Naive thymus-derived CD4-positive, alpha-beta T cell (primary cell): ENCODE measurements at regions of chr4 and their contacts with region 1.

Region 1: GRCh38 chr4:163651761-163652160 is 157.3 kb downstream of the TMA16 start:
- DNase-seq: no peak
- ATAC-seq: no peak
- H3K4me3 ChIP-seq: no peak overlapping the region
- H3K4me3 Mint-ChIP-seq: no peak overlapping the region
- H3K27ac ChIP-seq: no peak overlapping the region
- H3K27ac Mint-ChIP-seq: no peak overlapping the region
- H3K4me1 ChIP-seq: no peaks in the 10 kb centered on the region
- H3K4me1 Mint-ChIP-seq: peaks cover 0 to 8% (median 0%) of the 10 kb centered on the region in 7 donors
- H3K27me3 ChIP-seq: no peaks in the 10 kb centered on the region
- H3K27me3 Mint-ChIP-seq: peaks cover 0 to 5% (median 0%) of the 10 kb centered on the region in 5 donors

Region 2: DNA sequence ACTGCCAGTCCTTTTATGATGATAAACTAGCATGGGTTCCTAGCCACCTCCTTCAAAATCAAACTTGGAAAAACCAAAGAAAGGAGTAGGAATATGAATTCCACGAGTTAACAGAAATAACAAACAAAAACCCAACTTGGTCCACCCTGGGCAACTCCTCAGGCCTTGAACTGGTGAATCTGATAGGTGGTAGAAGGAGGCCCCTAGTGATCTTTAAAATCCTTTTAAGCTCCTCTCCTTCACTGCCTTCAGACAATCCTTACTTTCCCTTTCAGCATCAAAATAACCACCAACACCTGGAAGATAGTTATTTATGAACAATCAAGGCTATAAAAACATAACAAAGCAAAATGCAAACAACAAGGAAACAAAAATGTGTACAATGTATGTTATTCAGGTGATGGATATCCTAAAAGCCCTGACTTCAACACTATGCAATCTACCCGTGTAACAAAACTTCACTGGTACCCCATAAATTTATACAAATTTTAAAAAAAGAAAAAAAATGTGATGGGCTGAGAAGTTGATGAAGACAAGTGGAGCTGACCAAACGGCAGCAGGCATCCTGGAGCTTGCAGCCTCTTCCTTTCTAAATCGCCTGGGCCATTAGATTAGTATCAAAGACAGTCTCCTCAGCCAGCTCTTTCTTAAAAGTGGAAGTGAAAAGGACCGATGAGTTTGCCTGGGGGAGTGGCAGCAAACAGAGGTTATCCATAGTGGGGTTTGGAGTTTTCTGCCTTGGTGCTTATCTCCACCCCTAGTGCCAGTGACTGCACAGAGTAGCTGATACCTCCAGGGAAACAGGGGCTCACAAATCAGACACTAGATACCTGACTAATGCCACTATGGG is 22.3 kb after region 1 on chr4:
- CTCF ChIA-PET with region 1: no interaction called
- POLR2A ChIA-PET with region 1: no interaction called
- intact Hi-C with region 1: loop called in 1 of 2 experiments (anchors 2 kb)
- DNase-seq: no peak
- ATAC-seq: no peak
- H3K4me3 ChIP-seq: no peak overlapping the region
- H3K4me3 Mint-ChIP-seq: no peak overlapping the region
- H3K27ac ChIP-seq: no peak overlapping the region
- H3K27ac Mint-ChIP-seq: no peak overlapping the region
- H3K4me1 ChIP-seq: no peaks in the 10 kb centered on the region
- H3K4me1 Mint-ChIP-seq: peaks cover 0 to 52% (median 28%) of the 10 kb centered on the region in 7 donors
- H3K27me3 ChIP-seq: no peaks in the 10 kb centered on the region
- H3K27me3 Mint-ChIP-seq: no peaks in the 10 kb centered on the region